AG04450 (cell line): ENCODE measurements at regions of chr9 and their contacts with region 1.

Region 1: GRCh38 chr9:129006328-129007034 is 21.6 kb downstream of the SH3GLB2 start:
- DNase-seq: peak; percentile 23
- H3K4me3 ChIP-seq: no peak overlapping the region
- H3K27ac ChIP-seq: peak overlapping the region; percentile 52
- H3K27me3 ChIP-seq: no peaks in the 10 kb centered on the region
- CTCF ChIP-seq: peak; percentile 96

Region 2: DNA sequence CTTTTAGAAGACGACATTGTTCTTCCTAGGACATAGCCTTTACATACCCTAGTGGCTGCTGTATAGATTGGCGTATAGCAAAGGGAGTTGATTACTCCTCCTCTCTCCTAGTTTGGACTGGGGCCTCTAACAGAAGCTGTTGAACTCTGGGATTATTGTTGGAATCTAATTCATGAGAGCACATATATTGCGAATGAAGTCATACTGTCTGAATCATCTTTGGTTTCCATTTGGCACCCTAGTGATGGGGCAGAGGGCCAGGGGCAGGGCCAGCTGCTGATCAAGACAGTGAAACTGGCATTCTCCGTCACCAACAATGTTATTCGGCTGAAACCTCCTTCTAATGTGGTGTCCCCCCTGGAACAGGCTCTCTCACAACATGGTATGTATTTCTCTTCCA is 18.7 kb before region 1 on chr9:
- CTCF ChIA-PET with region 1: interaction called, 10 read pairs
- POLR2A ChIA-PET with region 1: no interaction called
- DNase-seq: peak; percentile 41
- H3K4me3 ChIP-seq: no peak overlapping the region
- H3K27ac ChIP-seq: no peak overlapping the region
- H3K27me3 ChIP-seq: no peaks in the 10 kb centered on the region
- CTCF ChIP-seq: peak; percentile 23; the same call in 1 of the 2 replicates

Region 3: DNA sequence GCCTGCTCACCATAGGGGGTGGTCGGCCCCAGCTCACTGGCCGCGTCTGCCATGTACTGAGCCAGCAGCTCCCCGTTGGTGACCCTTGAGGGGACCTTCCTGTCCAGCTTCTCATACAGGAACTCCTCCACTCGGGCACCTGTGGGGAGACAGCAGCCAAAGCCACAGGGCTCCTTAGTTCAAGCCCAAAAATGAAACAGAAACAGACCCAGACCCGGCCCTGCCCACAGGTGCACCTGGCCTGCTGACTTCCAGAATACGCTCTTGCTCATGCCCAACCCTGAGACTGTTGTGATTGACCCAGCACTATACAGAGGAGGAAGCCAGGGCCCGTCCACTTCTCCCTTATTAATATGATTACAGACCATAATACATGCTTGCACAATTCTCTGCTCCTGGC is 14.6 kb after region 1 on chr9:
- CTCF ChIA-PET with region 1: interaction called, 14 read pairs
- POLR2A ChIA-PET with region 1: interaction called, 3 read pairs
- DNase-seq: no peak
- H3K4me3 ChIP-seq: no peak overlapping the region
- H3K27ac ChIP-seq: no peak overlapping the region
- H3K27me3 ChIP-seq: no peaks in the 10 kb centered on the region
- CTCF ChIP-seq: no peak